H1 (cell line): ENCODE measurements at regions of chr20 and their contacts with region 1.

Region 1: DNA sequence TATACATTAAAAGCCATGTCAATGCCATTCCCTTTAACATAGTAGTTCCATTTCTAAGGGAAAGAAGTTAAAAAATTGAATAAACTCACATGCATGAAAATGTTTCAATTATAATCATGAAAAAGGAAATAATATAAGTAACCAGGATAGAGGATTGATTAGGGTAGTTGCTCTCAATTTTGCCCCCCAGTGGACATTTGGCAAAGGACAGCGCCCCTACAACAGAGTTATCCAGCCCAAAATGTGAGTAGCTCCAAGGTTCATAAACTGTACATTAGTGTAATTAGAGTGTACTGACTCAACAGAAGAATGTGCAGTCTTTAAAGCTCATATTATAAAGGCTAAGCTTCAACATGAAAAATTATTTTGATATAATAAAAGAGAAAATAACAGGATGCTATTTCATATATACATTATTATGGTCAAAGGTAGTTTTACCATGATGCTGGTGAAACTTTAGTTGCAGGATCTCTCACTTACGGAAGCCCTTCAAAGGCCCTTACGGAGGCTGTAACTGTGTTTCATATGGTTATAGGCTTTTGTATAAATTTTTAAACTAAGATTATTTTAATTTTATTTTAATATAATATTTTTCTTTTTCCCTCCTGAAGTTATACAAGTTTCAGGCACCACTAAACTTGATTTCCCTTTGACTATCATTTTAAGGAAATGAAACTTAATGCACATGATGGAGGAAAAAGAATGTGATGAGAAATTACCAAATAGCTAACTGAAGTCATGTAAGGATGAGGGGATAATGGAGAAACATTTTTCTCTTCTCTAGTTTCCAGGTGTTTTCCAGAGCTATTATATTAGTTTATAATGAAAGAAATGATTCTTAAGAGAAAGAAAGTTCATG is 403.6 kb downstream of the PLCB1 start:
- DNase-seq: no peak
- H3K4me3 ChIP-seq: no peak overlapping the region
- H3K27ac ChIP-seq: no peak overlapping the region
- H3K4me1 ChIP-seq: peaks cover 0 to 3% (median 0%) of the 10 kb centered on the region in 4 experiments; a peak in 1 of 7 replicates
- H3K27me3 ChIP-seq: no peaks in the 10 kb centered on the region
- CTCF ChIP-seq: peak; percentile 36 to 61 (median 61)
- EP300 ChIP-seq: no peak
- POLR2A ChIP-seq: no peak
- RAD21 ChIP-seq: peak; percentile 32 to 53; a peak in 3 of 4 replicates

Region 2: DNA sequence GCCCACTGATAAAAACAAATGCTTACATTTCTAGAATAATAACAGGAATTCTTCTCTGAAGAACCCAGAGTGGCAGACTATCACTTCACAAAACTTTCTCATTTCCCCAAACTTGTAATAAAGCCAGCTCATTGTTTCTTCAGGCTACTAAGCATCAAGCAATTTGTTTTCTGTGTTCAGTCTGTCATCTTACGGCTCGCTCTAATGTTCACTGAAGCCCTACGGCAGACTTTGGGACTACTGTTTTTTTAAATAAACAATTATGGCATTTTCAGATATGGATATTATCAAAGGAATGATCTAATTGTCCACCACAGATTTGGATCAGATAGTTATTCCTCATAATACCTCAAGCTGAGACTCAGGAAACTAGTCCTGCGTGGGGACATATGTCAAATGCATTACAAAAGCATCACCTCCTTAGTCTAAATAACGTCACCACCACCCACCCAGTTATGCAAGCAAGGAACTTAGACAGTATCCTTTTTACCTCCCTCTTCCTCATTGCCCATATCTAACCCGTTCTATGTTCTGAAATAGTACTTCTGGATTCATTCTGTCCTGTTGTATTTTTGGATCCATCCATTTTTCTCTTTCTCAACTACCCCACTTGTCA is 11.5 kb after region 1 on chr20:
- CTCF ChIA-PET with region 1: interaction called, 19 read pairs
- POLR2A ChIA-PET with region 1: no interaction called
- DNase-seq: no peak
- H3K4me3 ChIP-seq: no peak overlapping the region
- H3K27ac ChIP-seq: no peak overlapping the region
- H3K4me1 ChIP-seq: no peaks in the 10 kb centered on the region
- H3K27me3 ChIP-seq: no peaks in the 10 kb centered on the region
- CTCF ChIP-seq: no peak
- EP300 ChIP-seq: no peak
- POLR2A ChIP-seq: no peak
- RAD21 ChIP-seq: no peak

Region 3: GRCh38 chr20:8557711-8558110 is 22.1 kb after region 1 on chr20:
- CTCF ChIA-PET with region 1: interaction called, 16 read pairs
- POLR2A ChIA-PET with region 1: no interaction called
- DNase-seq: no peak
- H3K4me3 ChIP-seq: no peak overlapping the region
- H3K27ac ChIP-seq: no peak overlapping the region
- H3K4me1 ChIP-seq: no peaks in the 10 kb centered on the region
- H3K27me3 ChIP-seq: no peaks in the 10 kb centered on the region
- CTCF ChIP-seq: no peak
- EP300 ChIP-seq: no peak
- POLR2A ChIP-seq: no peak
- RAD21 ChIP-seq: no peak

Region 4: GRCh38 chr20:8964959-8965562 is 429.4 kb after region 1 on chr20:
- CTCF ChIA-PET with region 1: no interaction called
- POLR2A ChIA-PET with region 1: no interaction called
- DNase-seq: no peak
- H3K4me3 ChIP-seq: no peak overlapping the region
- H3K27ac ChIP-seq: no peak overlapping the region
- H3K4me1 ChIP-seq: no peaks in the 10 kb centered on the region
- H3K27me3 ChIP-seq: no peaks in the 10 kb centered on the region
- CTCF ChIP-seq: no peak
- EP300 ChIP-seq: no peak
- POLR2A ChIP-seq: no peak
- RAD21 ChIP-seq: no peak